Activated CD4-positive, alpha-beta memory T cell treated with anti-CD3 and anti-CD28 coated beads for 36 hours (primary cell): ENCODE measurements at regions of chr6 and their contacts with region 1.

Region 1: DNA sequence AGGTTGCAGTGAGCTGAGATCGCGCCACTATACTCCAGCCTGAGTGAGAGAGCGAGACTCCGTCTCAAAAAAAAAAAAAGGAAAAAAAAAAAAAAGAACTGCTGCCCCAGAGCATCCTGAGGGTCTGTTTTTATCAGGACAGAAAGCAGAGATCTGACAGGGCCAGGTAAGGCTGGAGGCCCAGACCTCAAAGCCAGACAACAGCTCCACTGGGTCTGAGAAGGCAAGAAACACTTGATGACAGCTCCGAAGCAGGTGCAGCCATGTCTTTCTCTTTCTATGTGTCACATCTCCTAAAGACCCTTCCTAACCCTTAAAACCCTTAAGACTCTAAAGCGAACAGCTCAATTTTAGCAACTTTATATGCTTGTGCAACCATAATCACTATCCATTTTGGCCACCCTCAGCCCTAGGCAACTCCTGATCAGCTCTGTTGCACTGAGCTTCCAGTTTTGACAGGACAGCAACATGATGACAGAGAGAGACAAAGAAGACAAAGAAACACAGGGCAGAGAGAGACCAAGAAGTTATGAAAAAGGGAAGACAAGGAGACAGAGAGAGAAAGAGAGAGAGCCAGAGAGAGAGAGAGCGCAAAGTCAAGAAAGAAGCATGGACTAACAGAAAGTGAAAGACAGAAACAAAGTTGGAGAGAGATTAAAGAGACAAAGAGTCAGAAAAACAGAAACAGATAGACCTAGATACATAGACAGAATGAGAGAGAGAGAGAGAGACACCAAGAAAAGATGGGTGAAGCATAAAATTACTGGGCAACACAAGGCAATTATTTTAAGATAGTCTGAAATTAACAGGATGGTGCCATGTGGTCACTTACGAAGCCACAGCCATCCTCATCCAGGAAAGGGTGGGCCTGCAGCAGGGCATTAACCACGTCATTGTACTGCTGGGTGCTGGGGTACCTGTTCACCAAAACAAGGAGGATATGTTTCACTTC is 39.2 kb downstream of the SAMD3 start:
- DNase-seq: peak; percentile 61
- H3K4me3 Mint-ChIP-seq: peak overlapping the region; percentile 52
- H3K27ac Mint-ChIP-seq: peak overlapping the region; percentile 77
- H3K4me1 Mint-ChIP-seq: peaks cover 40% of the 10 kb centered on the region
- H3K27me3 Mint-ChIP-seq: no peaks in the 10 kb centered on the region

Region 2: DNA sequence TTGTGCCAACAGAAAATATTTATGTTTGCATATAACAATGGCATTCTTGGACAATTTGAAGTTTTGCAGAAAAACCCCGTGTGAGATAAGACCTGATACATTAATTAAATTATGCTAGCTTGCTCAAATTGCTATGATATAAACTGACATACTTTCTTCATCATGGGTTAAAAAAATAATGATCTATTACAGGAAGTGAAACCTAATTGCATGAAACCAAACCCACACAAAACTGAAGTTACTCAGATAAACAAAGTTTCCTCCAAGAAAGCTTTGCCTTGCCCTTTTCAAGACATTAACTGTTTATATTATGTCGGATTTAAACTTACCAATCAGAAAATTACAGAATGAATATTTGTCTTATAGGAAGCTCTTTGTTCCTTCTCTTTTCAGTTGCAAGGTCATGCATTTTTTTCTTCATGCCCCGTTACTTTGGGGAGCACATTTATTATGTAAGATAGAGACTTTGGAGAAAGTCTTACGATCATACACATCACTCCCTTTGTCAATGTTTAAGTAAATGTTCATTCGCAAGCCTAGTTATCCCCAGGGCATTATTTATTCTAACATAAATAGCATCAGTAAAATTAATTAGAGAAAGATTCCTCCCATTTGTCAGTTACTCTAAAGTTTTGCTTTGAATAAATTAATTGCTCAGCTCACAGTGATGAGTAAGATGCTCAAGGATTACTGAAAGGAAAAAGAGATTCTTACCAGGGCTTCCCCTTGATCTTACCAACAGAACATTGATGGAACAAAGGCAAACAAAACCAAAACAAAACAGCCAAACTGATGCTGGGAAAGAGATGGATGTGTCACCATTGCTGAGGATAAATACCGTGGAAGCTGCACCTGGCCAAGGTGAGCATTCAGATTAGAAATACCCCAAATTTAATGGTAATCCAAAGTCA is 307.7 kb before region 1 on chr6:
- CTCF ChIA-PET with region 1: no interaction called
- POLR2A ChIA-PET with region 1: no interaction called
- intact Hi-C with region 1: no loop called
- DNase-seq: no peak
- H3K4me3 Mint-ChIP-seq: no peak overlapping the region
- H3K27ac Mint-ChIP-seq: no peak overlapping the region
- H3K4me1 Mint-ChIP-seq: peaks cover 21% of the 10 kb centered on the region
- H3K27me3 Mint-ChIP-seq: peaks cover 2% of the 10 kb centered on the region

Region 3: DNA sequence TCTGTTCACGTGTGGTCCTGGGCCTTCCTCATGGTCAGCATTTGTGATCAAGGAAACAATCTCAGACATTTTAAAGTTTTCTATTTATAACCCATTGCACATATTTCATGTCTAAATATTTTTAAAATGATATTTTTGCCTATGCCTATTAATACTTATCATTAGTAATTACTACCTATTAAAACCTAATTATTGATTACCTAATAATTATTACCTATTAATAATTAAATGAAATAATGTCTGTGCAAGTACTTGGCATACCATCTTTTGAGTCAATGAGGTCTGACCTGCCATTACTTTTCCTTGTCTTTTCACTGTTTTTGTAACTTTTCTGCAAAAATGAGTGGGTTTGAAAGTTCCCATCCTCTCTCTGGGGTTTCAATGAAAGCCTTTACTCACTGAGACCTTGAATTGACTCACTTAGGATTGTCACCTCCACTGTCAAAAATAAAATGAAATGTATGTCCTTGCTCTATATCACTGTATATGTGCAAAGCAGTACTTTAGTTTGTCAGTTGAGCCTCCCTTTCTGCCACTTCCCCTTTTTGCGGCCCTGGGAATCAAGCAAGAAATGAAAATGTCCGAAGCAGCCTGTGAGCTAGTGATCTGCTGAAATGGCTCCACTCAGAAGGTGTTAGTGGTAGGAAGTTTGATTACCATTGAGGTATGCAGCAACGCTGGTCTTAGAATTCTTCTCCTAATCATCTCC is 77.4 kb before region 1 on chr6:
- CTCF ChIA-PET with region 1: no interaction called
- POLR2A ChIA-PET with region 1: no interaction called
- intact Hi-C with region 1: no loop called
- DNase-seq: no peak
- H3K4me3 Mint-ChIP-seq: no peak overlapping the region
- H3K27ac Mint-ChIP-seq: no peak overlapping the region
- H3K4me1 Mint-ChIP-seq: peaks cover 6% of the 10 kb centered on the region
- H3K27me3 Mint-ChIP-seq: no peaks in the 10 kb centered on the region

Region 4: GRCh38 chr6:130138116-130138908 is 45.2 kb before region 1 on chr6:
- CTCF ChIA-PET with region 1: no interaction called
- POLR2A ChIA-PET with region 1: interaction called, 3 read pairs
- intact Hi-C with region 1: loop called (anchors 1 kb)
- DNase-seq: no peak
- H3K4me3 Mint-ChIP-seq: peak overlapping the region; percentile 44
- H3K27ac Mint-ChIP-seq: peak overlapping the region; percentile 55
- H3K4me1 Mint-ChIP-seq: peaks cover 52% of the 10 kb centered on the region
- H3K27me3 Mint-ChIP-seq: no peaks in the 10 kb centered on the region

Region 5: GRCh38 chr6:130202782-130203181 is 19.2 kb after region 1 on chr6:
- CTCF ChIA-PET with region 1: no interaction called
- POLR2A ChIA-PET with region 1: no interaction called
- intact Hi-C with region 1: loop called (anchors 2 kb)
- DNase-seq: peak; percentile 55
- H3K4me3 Mint-ChIP-seq: peak overlapping the region; percentile 9
- H3K27ac Mint-ChIP-seq: no peak overlapping the region
- H3K4me1 Mint-ChIP-seq: peaks cover 31% of the 10 kb centered on the region
- H3K27me3 Mint-ChIP-seq: no peaks in the 10 kb centered on the region

Region 6: GRCh38 chr6:130223508-130223907 is 40.0 kb after region 1 on chr6:
- CTCF ChIA-PET with region 1: interaction called, 3 read pairs
- POLR2A ChIA-PET with region 1: no interaction called
- intact Hi-C with region 1: loop called (anchors 2 kb)
- DNase-seq: peak; percentile 82
- H3K4me3 Mint-ChIP-seq: peak overlapping the region; percentile 3
- H3K27ac Mint-ChIP-seq: peak overlapping the region; percentile 58
- H3K4me1 Mint-ChIP-seq: peaks cover 33% of the 10 kb centered on the region
- H3K27me3 Mint-ChIP-seq: no peaks in the 10 kb centered on the region